T-cell (primary cell): ENCODE measurements at regions of chr7 and their contacts with region 1.

Region 1: DNA sequence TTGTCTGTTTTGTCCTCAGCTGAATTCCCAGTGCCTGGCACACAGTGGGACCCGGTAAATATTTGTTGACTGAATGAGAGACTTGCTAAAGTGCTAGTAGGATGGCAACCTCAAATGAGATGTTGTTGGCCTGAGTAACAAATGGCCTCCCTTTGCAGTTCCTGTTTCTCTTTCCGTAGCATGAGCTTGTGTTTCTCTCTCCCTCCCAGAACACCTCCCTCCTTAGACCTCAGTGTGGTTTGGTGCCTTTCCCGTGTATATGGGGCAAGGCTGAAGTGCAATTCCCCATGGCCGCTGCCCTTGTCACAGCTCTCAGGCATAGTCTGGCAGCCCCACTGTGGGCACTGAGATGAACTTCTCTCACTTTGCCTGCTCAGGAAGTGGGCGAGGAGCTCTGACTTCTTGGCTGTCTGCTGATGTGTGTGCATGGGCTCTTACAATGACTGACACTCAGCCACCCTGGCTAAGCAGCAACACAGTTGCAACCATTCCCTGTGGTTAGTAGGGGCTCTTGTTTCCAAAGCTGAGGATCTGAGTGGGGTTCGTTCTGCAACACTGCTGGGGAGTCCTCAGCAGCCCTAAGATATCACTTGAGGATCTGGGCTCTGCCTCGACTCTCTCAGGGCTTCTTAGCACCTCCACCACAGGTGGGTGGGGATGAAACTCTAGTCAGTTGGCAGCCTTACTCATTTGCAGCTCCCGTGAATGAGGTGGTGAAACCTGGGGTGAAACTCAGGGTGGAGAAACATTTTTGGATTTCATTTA is 136.1 kb downstream of the ICA1 start:
- DNase-seq: peak; percentile 67 to 91 (median 79)
- ATAC-seq: peak; percentile 97 to 99 (median 98)
- H3K4me3 ChIP-seq: peak overlapping the region; percentile 5 to 10
- H3K4me3 Mint-ChIP-seq: peak overlapping the region; percentile 45 to 77 (median 66)
- H3K27ac ChIP-seq: peak overlapping the region; percentile 92
- H3K27ac Mint-ChIP-seq: peak overlapping the region; percentile 99 to 100
- H3K4me1 ChIP-seq: peaks cover 44 to 73% of the 10 kb centered on the region in 2 experiments
- H3K4me1 Mint-ChIP-seq: peaks cover 84 to 86% (median 85%) of the 10 kb centered on the region in 3 donors
- H3K27me3 ChIP-seq: no peaks in the 10 kb centered on the region
- H3K27me3 Mint-ChIP-seq: no peaks in the 10 kb centered on the region

Region 2: DNA sequence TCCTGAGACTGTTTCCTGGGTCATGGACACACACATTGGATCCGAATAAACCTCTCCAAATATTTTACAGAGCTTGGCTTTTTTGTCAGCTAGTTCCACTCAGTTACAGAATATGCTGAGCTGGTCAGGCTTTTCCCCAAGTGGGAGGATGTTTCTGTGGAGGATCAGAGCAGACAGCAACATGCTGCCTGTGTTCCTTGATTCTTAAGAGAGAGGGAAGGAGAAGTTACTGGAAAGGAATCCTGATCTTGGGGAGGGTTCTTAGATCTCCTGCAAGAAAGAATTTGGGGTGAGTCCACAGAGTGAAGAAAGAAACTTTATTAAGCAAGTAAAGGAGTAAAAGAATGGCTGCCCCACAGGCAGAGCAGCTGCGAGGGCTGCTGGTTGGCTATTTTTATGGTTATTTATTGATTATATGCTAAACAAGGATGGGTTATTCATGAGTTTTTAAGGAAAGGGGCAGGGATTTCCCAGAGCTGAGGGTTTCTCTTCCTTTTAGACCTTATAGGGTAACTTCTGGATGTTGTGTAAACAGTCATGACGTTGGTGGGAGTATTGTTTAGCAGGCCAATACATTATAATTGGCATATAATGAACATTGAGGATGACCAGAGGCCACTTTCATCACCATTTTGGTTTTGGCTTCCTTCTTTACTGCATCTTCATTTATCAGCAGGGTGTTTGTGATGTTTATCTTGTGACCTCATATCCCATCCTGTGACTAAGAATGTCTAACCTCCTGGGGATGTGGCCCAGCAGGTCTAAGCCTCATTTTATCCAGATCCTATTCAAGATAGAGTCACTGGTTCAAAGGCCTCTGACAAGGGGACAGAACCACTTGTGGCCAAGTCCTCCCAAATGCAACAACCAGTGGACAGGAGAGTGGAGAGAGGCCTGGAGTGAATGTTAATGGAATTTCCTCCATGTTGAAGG is 330.4 kb before region 1 on chr7:
- CTCF ChIA-PET with region 1: no interaction called
- POLR2A ChIA-PET with region 1: no interaction called
- DNase-seq: no peak
- ATAC-seq: no peak
- H3K4me3 ChIP-seq: no peak overlapping the region
- H3K4me3 Mint-ChIP-seq: no peak overlapping the region
- H3K27ac ChIP-seq: no peak overlapping the region
- H3K27ac Mint-ChIP-seq: no peak overlapping the region
- H3K4me1 ChIP-seq: no peaks in the 10 kb centered on the region
- H3K4me1 Mint-ChIP-seq: no peaks in the 10 kb centered on the region
- H3K27me3 ChIP-seq: no peaks in the 10 kb centered on the region
- H3K27me3 Mint-ChIP-seq: no peaks in the 10 kb centered on the region

Region 3: DNA sequence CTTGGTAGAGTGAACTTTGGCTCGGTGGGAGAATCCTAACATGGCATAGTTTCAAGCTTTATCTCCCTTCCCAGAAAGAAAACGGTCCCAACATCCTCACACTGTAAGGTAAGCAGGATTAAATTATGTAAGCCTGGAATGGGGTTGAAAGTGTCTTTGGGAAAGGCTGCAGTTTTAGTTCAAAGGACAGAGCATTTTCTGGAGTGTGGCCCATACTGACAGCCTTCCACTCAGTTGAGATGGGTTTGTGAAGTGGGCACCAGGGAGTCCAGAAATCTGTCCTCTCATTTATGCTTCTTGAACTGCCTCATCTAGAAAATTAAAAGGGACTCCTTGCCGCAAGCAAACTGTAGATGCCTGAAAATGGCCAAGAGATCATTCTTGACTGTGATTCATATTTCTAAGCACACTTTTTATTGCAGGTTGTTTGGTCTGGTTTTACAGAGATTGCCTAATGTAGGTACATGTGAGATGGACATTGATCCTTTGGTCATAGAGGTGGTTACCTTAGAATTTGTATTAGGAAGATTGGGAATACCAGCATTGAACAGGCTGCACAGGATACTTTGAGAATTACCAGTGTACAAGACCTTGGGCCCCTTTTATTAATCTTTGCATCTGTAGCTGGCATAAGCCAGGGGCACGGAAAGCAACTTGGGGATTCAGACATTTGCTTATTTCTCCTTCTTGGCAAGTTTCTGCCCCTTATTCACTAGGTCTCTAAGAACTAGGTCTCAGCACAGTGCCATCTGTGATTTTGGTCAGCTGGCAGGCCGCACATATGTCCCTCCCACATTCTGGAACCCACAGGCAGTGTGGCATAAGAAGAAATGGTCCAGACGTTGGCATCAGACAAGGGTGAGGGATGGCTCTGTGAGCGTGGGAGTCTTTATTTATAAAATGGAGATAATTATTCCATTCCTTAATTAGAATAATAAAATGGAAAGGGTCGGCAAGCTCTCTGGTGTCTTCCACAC is 31.4 kb before region 1 on chr7:
- CTCF ChIA-PET with region 1: no interaction called
- POLR2A ChIA-PET with region 1: no interaction called
- DNase-seq: no peak
- ATAC-seq: no peak
- H3K4me3 ChIP-seq: no peak overlapping the region
- H3K4me3 Mint-ChIP-seq: no peak overlapping the region
- H3K27ac ChIP-seq: no peak overlapping the region
- H3K27ac Mint-ChIP-seq: no peak overlapping the region
- H3K4me1 ChIP-seq: no peaks in the 10 kb centered on the region
- H3K4me1 Mint-ChIP-seq: peaks cover 0 to 11% (median 0%) of the 10 kb centered on the region in 3 donors
- H3K27me3 ChIP-seq: no peaks in the 10 kb centered on the region
- H3K27me3 Mint-ChIP-seq: no peaks in the 10 kb centered on the region

Region 4: DNA sequence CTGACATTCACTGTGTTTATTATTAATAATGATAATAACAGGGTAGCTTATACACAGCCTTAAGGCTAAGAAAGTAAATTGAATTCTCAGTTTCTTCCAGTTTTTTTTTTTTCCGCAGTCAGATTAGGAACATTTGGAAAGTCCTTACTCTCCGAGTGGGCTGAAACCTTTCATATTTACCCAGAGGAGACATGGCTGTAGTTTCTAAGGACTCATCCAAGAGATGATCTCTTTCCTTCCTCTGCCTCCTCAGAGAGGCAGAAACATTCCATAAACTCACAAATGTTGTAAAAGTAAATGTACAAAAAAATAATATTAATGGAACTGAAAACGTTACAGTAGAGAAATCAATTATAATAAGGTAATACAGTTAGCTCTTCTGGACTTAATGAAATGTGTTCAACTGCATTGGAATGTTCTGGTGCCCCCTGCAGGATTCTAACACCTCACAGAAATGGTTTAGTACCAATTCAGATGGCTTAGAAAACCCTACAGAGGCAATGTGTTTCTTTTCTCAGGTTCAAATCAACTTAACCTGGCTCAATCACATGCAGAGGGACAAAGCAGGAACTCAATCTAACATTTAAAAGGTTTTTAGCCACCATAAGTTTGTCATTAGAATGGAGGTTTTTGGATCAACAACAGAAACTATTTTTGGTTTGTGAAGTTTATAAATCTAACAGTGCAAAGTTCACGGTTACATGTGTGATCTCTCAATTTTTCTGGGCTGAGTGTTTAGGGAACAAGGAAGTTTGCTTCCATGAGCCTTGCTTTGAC is 64.4 kb after region 1 on chr7:
- CTCF ChIA-PET with region 1: interaction called in 1 of 2 experiments, 12 read pairs
- POLR2A ChIA-PET with region 1: interaction called in 1 of 2 experiments, 3 read pairs
- DNase-seq: peak; percentile 5 to 85 (median 63)
- ATAC-seq: peak; percentile 60 to 80 (median 76)
- H3K4me3 ChIP-seq: no peak overlapping the region
- H3K4me3 Mint-ChIP-seq: no peak overlapping the region
- H3K27ac ChIP-seq: no peak overlapping the region
- H3K27ac Mint-ChIP-seq: peak overlapping the region in 1 of 2 donors; percentile 34
- H3K4me1 ChIP-seq: peaks cover 2 to 4% of the 10 kb centered on the region in 2 experiments
- H3K4me1 Mint-ChIP-seq: peaks cover 15 to 23% (median 20%) of the 10 kb centered on the region in 3 donors
- H3K27me3 ChIP-seq: no peaks in the 10 kb centered on the region
- H3K27me3 Mint-ChIP-seq: no peaks in the 10 kb centered on the region